Sigmoid colon (tissue), 7 donors: ENCODE measurements at regions of chr14 and their contacts with region 1.

Region 1: GRCh38 chr14:103385152-103385993 is at the start of gene MARK3:
- DNase-seq: peak; percentile 99
- H3K4me3 ChIP-seq: peak within 1 kb of the TSS; percentile 81 to 100 (median 92)
- H3K27ac ChIP-seq: peak within 1 kb of the TSS; percentile 95 to 99 (median 98)
- H3K4me1 ChIP-seq: peaks cover 0 to 38% (median 34%) of the 10 kb centered on the region in 4 donors
- H3K27me3 ChIP-seq: no peaks in the 10 kb centered on the region
- CTCF ChIP-seq: peak in 2 of 4 experiments; percentile 11 to 23
- EP300 ChIP-seq: no peak
- POLR2A ChIP-seq: peak; percentile 86
- total RNA-seq, gene MARK3: 66.7 to 104 (median 87.0) TPM

Region 2: GRCh38 chr14:103220134-103220981 is 165.0 kb before region 1 on chr14:
- intact Hi-C with region 1: no loop called
- DNase-seq: no peak
- H3K4me3 ChIP-seq: peak overlapping the region in 3 of 4 donors; percentile 35 to 51 (median 44)
- H3K27ac ChIP-seq: no peak overlapping the region
- H3K4me1 ChIP-seq: peaks cover 0 to 11% (median 10%) of the 10 kb centered on the region in 4 donors
- H3K27me3 ChIP-seq: peaks cover 13 to 52% (median 31%) of the 10 kb centered on the region in 3 donors
- CTCF ChIP-seq: no peak
- EP300 ChIP-seq: no peak
- POLR2A ChIP-seq: no peak

Region 3: DNA sequence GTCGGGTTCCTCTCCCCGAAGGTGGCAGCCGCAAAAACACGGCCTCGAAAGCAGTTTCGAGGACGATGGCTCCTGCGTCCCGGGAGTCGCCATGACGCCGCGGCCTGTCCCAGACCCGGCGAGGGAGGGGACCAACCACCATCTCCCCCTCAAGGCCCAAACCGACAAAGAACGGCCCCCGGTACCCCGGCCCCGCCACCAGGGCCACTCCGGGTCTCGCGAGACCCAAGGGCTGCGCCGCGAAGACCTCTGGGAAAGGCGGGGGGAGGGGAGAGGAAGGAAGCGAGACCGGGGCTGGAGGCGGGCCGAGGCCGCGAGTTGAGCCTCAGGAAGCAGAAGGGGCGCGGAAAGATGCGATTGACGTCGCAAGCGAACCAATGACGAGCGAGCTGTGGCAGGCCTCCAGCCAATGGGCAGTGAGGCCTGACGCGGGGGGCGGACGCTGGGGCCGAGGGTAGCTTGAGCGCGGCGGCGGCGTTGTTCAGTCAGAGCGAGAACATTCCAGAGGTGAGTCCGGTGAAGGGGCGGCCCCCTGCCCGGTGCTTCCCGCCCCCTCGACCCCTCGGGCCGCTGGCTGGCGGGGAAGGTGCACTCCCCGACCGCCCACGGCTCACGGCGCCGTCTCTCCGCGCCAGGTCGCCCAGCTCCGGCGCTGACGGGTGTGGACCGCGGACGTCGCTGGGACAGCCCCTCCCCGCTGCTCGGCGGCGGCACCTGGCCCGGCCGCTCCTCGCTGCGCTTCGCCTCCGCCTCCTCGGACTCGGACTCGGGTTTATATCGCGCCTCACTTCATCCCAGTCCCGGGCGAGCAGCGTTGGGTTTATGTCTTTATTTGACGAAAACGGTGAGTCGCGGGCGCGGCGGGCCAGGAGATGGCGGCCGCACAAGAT is 51.4 kb before region 1 on chr14 and contains the start of gene EIF5:
- intact Hi-C with region 1: loop called (anchors 1 kb)
- DNase-seq: peak; percentile 100
- H3K4me3 ChIP-seq: peak within 1 kb of the TSS; percentile 91 to 98 (median 98)
- H3K27ac ChIP-seq: peak within 1 kb of the TSS; percentile 99 to 100 (median 100)
- H3K4me1 ChIP-seq: peaks cover 0 to 44% (median 26%) of the 10 kb centered on the region in 4 donors
- H3K27me3 ChIP-seq: no peaks in the 10 kb centered on the region
- CTCF ChIP-seq: peak; percentile 21 to 58 (median 43)
- EP300 ChIP-seq: peak in 1 of 4 donors; percentile 78
- POLR2A ChIP-seq: peak; percentile 92 to 96
- total RNA-seq, gene EIF5: 170 to 305 (median 215) TPM

Region 4: DNA sequence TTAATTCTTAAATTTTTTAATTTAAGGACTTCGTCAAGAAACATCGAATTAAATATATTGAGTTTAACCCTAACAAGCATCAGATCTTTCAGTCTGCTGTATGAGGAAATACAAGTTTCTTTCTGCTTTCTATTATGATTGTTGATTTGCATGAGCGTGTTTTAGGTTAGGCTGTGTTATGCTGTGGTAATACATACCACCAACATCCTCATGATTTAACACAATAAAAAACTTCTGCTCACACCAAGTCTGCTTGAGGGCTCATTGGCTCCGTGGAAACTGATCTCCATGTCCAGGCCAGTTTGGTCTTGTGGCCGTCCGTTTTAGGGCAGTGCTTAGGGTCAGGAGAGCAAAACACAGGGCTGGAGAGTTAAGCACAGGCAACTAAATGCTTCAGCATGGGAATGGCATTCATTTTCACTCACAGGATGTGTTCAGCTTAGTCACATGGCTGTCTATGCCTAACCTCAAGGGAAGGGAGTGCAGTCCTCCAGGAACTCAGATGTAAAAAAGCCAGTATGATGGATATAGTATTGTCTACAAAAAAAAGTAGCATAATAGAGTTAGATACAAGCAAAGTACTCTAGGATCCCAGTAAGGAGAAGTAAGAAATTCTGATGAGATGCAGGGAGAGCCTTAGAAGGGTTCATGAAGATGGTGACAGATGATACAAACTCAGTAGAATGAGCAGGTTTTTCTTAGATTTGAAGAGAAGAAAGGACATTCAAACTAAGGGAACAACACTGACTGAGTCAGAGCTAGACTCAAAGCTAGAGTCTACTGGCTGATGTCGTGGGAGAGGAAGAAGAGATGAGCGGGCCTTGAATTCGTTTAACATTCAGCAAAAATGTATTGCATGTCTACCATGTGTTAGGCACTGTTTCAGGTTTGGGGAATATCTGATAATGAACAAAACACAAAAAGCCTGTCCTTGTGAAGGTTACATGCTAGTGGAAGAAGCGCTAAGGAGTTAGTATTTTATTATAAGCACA is 16.1 kb after region 1 on chr14:
- intact Hi-C with region 1: no loop called
- DNase-seq: no peak
- H3K4me3 ChIP-seq: no peak overlapping the region
- H3K27ac ChIP-seq: no peak overlapping the region
- H3K4me1 ChIP-seq: peaks cover 0 to 69% (median 58%) of the 10 kb centered on the region in 4 donors
- H3K27me3 ChIP-seq: no peaks in the 10 kb centered on the region
- CTCF ChIP-seq: no peak
- EP300 ChIP-seq: no peak
- POLR2A ChIP-seq: no peak

Region 5: DNA sequence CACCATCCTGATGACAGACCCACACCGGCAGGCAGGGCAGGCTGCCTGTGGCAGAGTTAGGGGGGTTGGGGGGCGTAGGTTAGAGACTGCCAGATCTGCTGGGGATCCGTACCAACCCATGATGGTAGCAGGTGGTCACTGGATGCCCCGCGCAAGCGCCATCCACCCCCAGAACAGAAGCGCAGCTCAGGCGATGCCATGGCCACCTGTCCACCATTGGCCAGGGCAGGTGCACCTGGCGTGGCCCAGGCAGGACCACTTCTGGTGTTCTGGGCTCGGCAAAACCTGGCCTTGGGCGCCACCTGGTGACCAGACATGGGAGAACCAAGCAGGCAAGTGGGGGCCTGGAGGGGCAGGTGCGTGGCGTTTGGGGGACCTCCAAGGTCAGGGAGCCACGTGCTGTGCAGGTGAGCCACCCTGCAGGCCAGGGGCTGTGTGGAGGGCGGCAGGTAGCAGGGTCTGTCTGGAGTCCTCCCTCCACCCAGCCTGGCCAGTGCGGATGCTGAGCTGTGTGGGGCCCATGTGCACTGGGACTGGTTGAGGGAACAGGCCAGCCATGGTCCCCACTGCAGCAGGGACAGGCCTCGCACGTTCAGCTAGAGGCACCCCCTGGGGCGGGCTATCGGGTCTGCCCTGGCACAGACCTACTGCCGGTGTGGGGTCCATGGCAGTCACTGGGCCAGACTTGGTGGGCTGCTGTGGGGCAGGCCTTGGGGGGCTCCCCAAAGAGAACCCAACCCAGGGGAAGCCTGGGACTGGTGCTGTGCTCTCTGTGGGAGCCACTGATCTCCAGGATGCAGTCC is 161.5 kb after region 1 on chr14:
- intact Hi-C with region 1: no loop called
- DNase-seq: peak; percentile 88
- H3K4me3 ChIP-seq: no peak overlapping the region
- H3K27ac ChIP-seq: peak overlapping the region; percentile 55 to 98 (median 93)
- H3K4me1 ChIP-seq: peaks cover 0 to 93% (median 91%) of the 10 kb centered on the region in 4 donors
- H3K27me3 ChIP-seq: no peaks in the 10 kb centered on the region
- CTCF ChIP-seq: peak; percentile 95 to 97 (median 97)
- EP300 ChIP-seq: no peak
- POLR2A ChIP-seq: no peak

Region 6: DNA sequence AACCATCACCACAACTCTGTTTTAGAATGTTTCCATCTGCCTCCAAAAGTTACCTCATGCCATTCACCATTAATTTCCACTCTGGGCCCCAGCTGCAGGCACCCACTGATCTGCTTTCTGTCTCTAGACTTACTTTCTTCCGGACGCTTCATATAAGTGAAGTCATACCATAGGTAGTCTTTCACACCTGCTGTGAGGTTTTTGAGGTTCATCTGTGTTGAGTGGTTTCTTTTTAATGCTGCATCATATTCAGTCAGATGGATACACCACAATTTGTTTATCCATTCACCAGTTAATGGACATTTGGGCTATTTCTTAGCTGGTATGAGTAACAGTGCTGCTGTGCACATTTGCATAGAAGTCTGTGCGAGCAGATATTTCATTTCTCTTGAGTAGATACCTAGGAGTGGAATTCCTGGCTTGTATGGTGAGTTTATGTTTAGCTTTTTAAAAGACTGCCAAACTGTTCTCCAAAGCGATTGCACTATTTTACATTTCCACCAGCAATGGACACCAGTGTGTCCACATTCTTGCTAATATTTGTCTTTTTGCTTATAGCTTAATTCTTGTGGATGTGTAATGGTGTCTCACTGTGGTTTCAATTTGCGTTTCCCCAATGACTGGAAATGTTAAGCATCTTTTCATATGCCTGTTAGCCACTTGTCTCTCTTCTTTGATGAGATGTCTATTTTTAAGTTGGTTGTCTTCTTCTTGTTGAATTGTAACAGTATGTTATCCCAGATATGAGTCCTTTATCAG is 378.5 kb after region 1 on chr14:
- intact Hi-C with region 1: no loop called
- DNase-seq: no peak
- H3K4me3 ChIP-seq: no peak overlapping the region
- H3K27ac ChIP-seq: no peak overlapping the region
- H3K4me1 ChIP-seq: no peaks in the 10 kb centered on the region
- H3K27me3 ChIP-seq: no peaks in the 10 kb centered on the region
- CTCF ChIP-seq: no peak
- EP300 ChIP-seq: no peak
- POLR2A ChIP-seq: no peak